Sciatic nerve (tissue), 2 donors: ENCODE measurements at regions of chr6 and their contacts with region 1.

Region 1: GRCh38 chr6:163554663-163555062 is 140.1 kb downstream of the QKI start:
- DNase-seq: peak; percentile 57
- ATAC-seq: peak; percentile 31

Region 2: GRCh38 chr6:163226836-163227485 is 327.7 kb before region 1 on chr6:
- intact Hi-C with region 1: no loop called
- DNase-seq: no peak
- ATAC-seq: no peak

Region 3: DNA sequence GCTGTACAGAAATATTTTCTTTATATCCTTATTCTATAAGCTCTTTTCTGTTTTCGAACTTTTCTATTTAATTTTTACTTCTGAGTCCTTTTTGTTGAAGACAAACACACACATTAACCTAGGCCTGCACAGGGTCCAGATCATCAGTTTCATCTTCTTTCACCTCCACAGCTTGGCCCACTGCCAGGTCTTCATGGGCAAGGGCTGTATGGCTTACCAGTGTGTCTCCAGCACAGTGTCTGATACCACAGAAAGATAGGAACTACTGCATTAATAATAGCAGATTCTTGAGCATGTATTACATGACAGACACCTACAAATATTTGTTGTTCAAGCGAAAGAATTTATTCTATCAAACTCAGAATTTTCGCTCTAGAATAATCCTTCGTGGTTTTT is 115.7 kb before region 1 on chr6:
- intact Hi-C with region 1: loop called (anchors 10 kb)
- DNase-seq: peak; percentile 73
- ATAC-seq: peak; percentile 53